K562 (cell line): ENCODE measurements at regions of chr14 and their contacts with region 1.

Region 1: DNA sequence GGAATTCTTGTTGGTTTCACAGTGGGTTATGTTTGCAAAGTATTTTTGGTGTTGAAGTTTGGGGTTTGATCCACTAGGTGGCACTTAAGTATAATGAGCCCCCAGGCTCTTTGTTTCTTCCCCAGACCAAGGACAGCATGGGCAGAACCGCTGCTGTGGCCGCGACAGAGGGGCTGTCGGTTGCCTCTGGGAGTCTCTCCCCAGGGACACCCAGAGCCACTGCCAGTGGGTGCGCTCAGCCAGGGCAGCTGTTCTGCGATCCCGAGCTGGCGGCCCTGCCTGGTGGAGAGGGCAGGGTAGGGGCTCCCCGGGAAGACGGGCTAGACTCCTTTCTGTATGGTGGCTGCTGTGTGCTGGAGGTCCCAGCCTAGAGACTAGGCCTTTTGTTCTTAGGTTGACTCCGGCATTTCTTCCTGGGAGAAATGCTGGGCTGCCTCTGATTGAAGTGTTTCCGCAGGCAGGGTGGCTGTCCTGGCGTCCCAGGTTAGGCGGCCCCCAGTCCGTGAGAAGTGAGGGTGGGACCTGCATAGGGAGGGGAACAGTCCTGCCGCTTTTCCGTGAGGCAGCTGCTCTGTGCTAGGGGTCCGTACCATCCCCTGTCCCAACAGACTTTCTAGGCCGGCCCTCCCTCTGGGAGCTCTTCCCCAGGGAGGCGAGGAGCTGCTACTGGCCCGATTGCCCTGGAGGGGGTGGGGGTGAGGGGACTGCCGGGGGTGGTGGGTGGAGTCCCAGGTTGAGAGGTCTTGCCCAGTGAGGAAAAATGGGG is 253.1 kb upstream of the PELI2 start:
- DNase-seq: peak; percentile 23 to 39 (median 28)
- ATAC-seq: peak; percentile 88
- H3K4me3 ChIP-seq: no peak overlapping the region
- H3K27ac ChIP-seq: no peak overlapping the region
- H3K4me1 ChIP-seq: no peaks in the 10 kb centered on the region; a peak in 1 of 5 replicates
- H3K27me3 ChIP-seq: no peaks in the 10 kb centered on the region
- CTCF ChIP-seq: peak; percentile 46 to 64 (median 47); a peak in 4 of 6 replicates
- EP300 ChIP-seq: no peak
- POLR2A ChIP-seq: no peak
- RAD21 ChIP-seq: peak; percentile 58 to 76

Region 2: GRCh38 chr14:55411426-55412389 is 453.4 kb before region 1 on chr14 and contains the start of gene ATG14:
- CTCF ChIA-PET with region 1: no interaction called
- POLR2A ChIA-PET with region 1: no interaction called
- in situ Hi-C with region 1: no loop called
- intact Hi-C with region 1: no loop called
- DNase-seq: peak; percentile 84 to 92 (median 89)
- ATAC-seq: peak; percentile 99
- H3K4me3 ChIP-seq: peak within 1 kb of the TSS; percentile 98
- H3K27ac ChIP-seq: peak within 1 kb of the TSS; percentile 72
- H3K4me1 ChIP-seq: peaks cover 3 to 11% of the 10 kb centered on the region in 2 experiments; a peak in 4 of 5 replicates
- H3K27me3 ChIP-seq: no peaks in the 10 kb centered on the region
- CTCF ChIP-seq: no peak
- EP300 ChIP-seq: no peak
- POLR2A ChIP-seq: peak; percentile 78
- RAD21 ChIP-seq: 0 out of 4 replicates have a peak, but pooled peaks of 1 of the 2 experiments have one; percentile 15
- polyA plus RNA-seq, gene ATG14: 0.55 to 0.99 TPM

Region 3: DNA sequence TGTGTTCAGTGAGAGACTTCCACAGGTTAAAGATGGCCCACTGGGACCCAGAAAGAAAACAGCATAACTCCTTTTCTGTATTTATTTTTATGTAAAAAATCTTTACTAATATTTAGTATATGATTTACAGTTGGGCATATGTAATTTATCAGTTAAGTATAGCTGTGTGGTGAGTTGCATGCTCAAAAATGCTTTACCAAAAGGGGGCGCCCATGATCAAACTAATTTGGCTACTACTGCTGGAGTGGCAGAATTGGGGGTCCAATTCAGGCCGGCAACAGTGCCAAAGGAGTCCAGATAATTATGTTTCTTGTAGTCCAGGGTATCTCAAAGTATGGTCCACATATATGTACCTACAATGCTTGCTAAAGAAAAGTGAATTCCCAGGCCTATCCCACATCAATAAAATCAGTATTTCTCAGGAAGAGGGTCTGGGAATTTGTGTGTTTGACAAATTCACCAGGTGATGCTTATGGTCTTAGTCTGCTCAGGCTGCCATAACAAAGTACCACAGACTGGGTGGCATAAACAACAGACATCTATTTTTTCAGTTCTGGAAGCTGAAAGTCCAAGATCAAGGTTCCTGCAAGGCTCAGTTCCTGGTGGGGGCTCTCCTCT is 133.1 kb before region 1 on chr14:
- CTCF ChIA-PET with region 1: no interaction called
- POLR2A ChIA-PET with region 1: no interaction called
- in situ Hi-C with region 1: no loop called
- intact Hi-C with region 1: loop called (anchors 5 kb)
- DNase-seq: peak in 2 of 4 experiments; percentile 9 to 49
- ATAC-seq: peak; percentile 69; the same call in 2 of the 3 replicates
- H3K4me3 ChIP-seq: no peak overlapping the region
- H3K27ac ChIP-seq: no peak overlapping the region
- H3K4me1 ChIP-seq: no peaks in the 10 kb centered on the region
- H3K27me3 ChIP-seq: no peaks in the 10 kb centered on the region
- CTCF ChIP-seq: peak; percentile 46 to 65 (median 50); a peak in 5 of 6 replicates
- EP300 ChIP-seq: no peak
- POLR2A ChIP-seq: no peak
- RAD21 ChIP-seq: peak; percentile 61 to 71

Region 4: DNA sequence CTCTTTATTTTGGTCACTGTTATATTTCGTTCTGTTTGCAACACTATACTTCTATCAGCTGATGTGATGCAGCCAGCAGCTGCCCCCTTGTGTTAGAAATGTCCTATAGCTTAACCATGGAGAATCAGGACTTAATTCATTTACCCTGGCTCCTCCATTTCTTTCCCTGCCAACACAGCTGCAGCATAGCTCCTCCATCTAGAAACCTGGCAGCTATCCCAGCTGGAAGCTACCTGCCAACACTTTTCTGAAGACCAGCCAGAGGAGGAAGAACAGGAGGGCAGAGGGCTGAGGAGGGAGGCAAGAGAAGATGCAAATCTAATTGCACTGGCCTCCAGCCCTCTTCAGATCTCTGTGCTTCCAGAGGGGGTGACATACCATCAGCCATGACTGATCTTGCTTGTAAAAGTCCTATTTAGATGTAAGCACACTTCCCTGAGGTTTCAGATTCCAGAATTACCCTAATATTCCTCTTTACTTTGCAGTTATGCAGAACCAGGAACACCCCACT is 557.7 kb after region 1 on chr14:
- CTCF ChIA-PET with region 1: no interaction called
- POLR2A ChIA-PET with region 1: no interaction called
- in situ Hi-C with region 1: no loop called
- intact Hi-C with region 1: loop called (anchors 5 kb)
- DNase-seq: peak in 2 of 4 experiments; percentile 11 to 20
- ATAC-seq: peak; percentile 66
- H3K4me3 ChIP-seq: no peak overlapping the region
- H3K27ac ChIP-seq: no peak overlapping the region
- H3K4me1 ChIP-seq: no peaks in the 10 kb centered on the region
- H3K27me3 ChIP-seq: no peaks in the 10 kb centered on the region; a peak in 1 of 5 replicates
- CTCF ChIP-seq: peak; percentile 26 to 59 (median 42); a peak in 4 of 6 replicates
- EP300 ChIP-seq: no peak
- POLR2A ChIP-seq: no peak
- RAD21 ChIP-seq: peak; percentile 54 to 77